AG04450 (cell line): ENCODE measurements at regions of chr13 and their contacts with region 1.

Region 1: GRCh38 chr13:23858546-23858945 is 30.7 kb downstream of the MIPEP start:
- DNase-seq: no peak
- H3K4me3 ChIP-seq: no peak overlapping the region
- H3K27ac ChIP-seq: no peak overlapping the region
- H3K27me3 ChIP-seq: no peaks in the 10 kb centered on the region
- CTCF ChIP-seq: no peak

Region 2: GRCh38 chr13:23679220-23679619 is 179.3 kb before region 1 on chr13:
- CTCF ChIA-PET with region 1: no interaction called
- POLR2A ChIA-PET with region 1: interaction called, 14 read pairs
- DNase-seq: no peak
- H3K4me3 ChIP-seq: no peak overlapping the region
- H3K27ac ChIP-seq: peak overlapping the region; percentile 47
- H3K27me3 ChIP-seq: no peaks in the 10 kb centered on the region
- CTCF ChIP-seq: no peak